Activated T-helper 1 cell treated with anti-CD3 and anti-CD28 coated beads, Interleukin-12 subunit alpha, Interleukin-12 subunit beta, Interleukin-2, Interleukin-4 antibody, amounts not matched to agents 30 ng/mL and 10 ng/mL and 1 ng/mL, durations not matched to agents 14 hours and 24 hours and 36 hours (primary cell): ENCODE measurements at regions of chr1 and their contacts with region 1.

Region 1: DNA sequence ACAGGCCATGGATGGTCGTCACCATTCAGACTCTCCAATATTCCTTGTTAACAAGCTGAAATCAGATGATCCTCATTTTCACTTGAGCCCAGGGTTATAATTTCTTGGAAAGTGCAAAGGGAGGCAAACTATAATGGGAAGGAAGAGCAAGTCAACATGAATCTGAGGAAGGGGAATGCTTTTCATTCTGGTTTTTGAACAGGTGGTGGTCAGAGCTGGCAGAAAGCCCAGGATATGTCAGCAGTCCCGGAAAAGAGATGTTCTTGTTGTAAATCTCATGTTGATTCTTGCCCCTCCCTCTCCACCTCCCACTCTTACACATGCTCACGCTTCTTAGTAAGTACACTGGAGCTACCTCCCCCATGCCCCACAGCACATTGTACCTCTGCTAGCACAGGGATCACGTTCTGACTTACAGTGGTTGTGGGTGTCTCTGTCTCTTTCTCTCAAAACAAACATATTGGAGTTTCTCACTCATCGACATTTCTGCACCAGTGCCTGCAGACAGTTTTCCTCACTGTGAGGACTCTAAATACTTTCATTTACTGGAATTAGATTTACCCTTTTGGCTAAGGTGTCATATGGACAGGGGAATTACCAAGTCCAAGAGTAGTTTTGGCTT is 77.6 kb downstream of the XCL2 start:
- DNase-seq: peak; percentile 18
- H3K4me3 Mint-ChIP-seq: peak overlapping the region; percentile 30
- H3K27ac Mint-ChIP-seq: peak overlapping the region; percentile 71
- H3K4me1 Mint-ChIP-seq: peaks cover 67% of the 10 kb centered on the region
- H3K27me3 Mint-ChIP-seq: no peaks in the 10 kb centered on the region

Region 2: DNA sequence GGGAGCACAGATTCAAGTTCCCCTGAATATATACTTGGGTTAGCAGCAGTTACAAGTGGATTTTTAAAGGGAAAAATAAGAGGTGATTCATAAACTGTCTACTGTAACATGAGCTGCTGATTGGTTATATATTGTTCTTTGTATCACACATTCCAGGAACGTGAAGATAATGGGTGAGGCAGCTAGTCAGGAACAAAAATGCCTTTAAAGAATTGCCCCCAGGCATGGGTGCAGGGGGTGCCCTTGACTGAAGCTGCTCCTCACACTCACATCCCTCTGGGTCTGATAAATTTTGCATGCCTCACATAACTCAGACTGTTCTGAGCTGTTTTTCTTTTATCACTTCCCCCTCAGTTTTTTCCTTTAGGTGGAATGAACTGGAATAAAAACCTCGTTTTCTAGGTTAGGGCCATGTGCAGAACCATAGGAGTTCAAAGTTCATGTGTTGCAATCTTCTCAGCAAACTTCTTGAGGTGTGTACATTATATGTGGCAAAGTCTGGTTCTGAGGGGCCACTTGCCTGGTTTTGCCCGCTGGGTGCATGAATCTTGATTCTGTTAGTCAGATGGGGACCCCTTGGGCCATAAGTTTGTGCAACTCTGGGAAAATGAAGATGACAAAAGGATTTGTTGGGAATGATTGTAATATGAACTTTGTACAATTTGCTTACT is 164.4 kb before region 1 on chr1:
- intact Hi-C with region 1: no loop called
- DNase-seq: no peak
- H3K4me3 Mint-ChIP-seq: no peak overlapping the region
- H3K27ac Mint-ChIP-seq: no peak overlapping the region
- H3K4me1 Mint-ChIP-seq: no peaks in the 10 kb centered on the region
- H3K27me3 Mint-ChIP-seq: peaks cover 1% of the 10 kb centered on the region

Region 3: DNA sequence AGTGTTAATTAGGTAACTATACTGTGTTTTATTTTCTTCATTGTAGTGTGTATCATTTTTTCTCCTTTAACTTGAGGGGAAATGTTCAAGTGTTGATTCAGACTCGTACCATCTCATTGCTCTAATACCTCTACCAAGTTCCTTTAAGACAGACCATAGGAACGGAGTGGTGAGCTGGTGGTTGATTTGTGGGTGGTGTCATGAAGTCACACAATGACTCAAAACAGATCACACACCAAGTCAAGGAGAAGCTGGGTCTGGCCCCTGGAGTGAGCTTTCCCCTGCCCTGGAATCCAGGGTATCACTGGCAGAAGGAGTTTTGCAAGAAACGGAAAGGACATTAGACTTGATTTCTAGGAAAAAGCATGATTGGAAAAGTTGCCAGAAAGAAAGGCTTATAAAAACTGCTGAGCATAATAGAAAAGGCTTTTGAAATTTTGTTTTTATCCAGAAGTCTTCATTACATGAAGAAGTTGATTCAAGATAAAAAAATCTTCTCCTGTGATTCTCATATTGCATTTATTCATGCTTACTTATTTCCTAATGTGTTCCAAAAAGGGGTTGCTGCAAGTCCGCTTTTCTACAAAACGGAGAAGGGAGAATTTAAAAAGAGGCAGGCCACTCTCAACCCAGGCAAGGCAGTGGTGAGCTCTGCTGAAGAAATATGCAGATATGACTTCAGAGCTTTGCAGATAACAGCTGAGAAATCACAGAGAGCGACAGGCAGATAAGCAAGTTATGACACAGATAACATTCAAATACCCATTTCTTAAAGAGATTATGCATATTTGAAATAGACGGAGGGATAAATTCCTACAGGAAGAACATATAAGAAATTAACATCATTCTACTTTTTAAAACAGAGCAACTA is 105.8 kb before region 1 on chr1:
- intact Hi-C with region 1: loop called (anchors 2 kb)
- DNase-seq: peak; percentile 36
- H3K4me3 Mint-ChIP-seq: peak overlapping the region; percentile 12
- H3K27ac Mint-ChIP-seq: peak overlapping the region; percentile 68
- H3K4me1 Mint-ChIP-seq: peaks cover 43% of the 10 kb centered on the region
- H3K27me3 Mint-ChIP-seq: peaks cover 3% of the 10 kb centered on the region

Region 4: GRCh38 chr1:168372861-168373371 is 93.3 kb before region 1 on chr1:
- intact Hi-C with region 1: no loop called
- DNase-seq: no peak
- H3K4me3 Mint-ChIP-seq: no peak overlapping the region
- H3K27ac Mint-ChIP-seq: no peak overlapping the region
- H3K4me1 Mint-ChIP-seq: no peaks in the 10 kb centered on the region
- H3K27me3 Mint-ChIP-seq: peaks cover 7% of the 10 kb centered on the region

Region 5: GRCh38 chr1:168498159-168498631 is 32.0 kb after region 1 on chr1:
- intact Hi-C with region 1: loop called (anchors 1 kb)
- DNase-seq: no peak
- H3K4me3 Mint-ChIP-seq: no peak overlapping the region
- H3K27ac Mint-ChIP-seq: no peak overlapping the region
- H3K4me1 Mint-ChIP-seq: peaks cover 38% of the 10 kb centered on the region
- H3K27me3 Mint-ChIP-seq: peaks cover 4% of the 10 kb centered on the region

Region 6: GRCh38 chr1:168535536-168535935 is 69.3 kb after region 1 on chr1:
- intact Hi-C with region 1: loop called (anchors 1 kb)
- DNase-seq: peak; percentile 22
- H3K4me3 Mint-ChIP-seq: peak overlapping the region; percentile 69
- H3K27ac Mint-ChIP-seq: peak overlapping the region; percentile 63
- H3K4me1 Mint-ChIP-seq: peaks cover 55% of the 10 kb centered on the region
- H3K27me3 Mint-ChIP-seq: peaks cover 4% of the 10 kb centered on the region

Region 7: GRCh38 chr1:169694304-169695075 is 1228.3 kb after region 1 on chr1:
- intact Hi-C with region 1: loop called (anchors 5 kb)
- DNase-seq: peak; percentile 56
- H3K4me3 Mint-ChIP-seq: peak overlapping the region; percentile 28
- H3K27ac Mint-ChIP-seq: peak overlapping the region; percentile 90
- H3K4me1 Mint-ChIP-seq: peaks cover 96% of the 10 kb centered on the region
- H3K27me3 Mint-ChIP-seq: no peaks in the 10 kb centered on the region